SK-N-SH (cell line): ENCODE measurements at regions of chrX and their contacts with region 1.

Region 1: DNA sequence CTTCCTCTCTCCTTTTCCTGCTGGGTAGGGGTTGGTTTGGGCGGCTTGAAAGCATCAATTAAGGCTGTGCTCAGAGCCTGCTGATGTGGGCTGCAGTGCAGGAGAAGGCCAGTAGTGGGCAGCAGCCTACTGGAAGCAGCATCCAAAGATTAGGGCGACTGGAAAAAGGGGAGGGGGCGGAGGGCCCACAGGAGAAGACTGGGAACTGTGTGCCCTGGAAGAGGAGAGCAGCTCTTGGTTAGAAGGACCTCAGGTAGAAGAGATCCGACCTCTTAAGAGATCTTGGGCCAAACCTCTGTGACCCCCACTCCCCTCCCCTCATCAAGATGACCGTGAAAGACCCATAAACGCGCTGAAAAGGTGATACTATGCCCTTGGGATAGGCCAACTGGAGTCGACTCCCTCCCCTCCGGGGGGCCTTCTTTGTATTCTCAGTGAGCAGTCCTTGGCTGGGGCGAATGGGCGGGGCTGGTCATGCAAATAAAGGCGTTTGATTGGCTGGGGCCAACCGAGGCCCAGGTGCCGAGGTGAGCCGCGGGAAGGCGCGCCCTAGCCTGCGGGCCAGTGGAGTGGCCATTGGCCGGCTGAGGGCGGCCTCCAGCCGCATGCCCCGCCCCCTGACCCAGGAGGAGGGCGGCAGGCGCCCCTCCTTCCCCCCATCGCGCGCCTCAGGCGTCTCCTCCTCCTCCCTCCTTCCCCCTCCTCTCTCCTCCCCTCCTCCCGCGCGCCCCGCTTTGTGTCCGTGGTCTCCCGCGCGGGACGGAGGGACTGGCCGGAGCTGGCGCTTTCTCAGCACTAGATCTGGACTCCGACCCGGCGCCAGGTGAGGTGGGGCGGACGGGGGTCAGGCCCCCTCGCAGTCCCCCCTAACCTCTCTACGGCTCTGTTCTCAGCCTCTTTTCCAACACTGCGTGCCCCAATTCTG is 10.1 kb downstream of the DLG3 start:
- DNase-seq: peak; percentile 88
- H3K4me3 ChIP-seq: peak overlapping the region; percentile 62 to 64
- H3K27ac ChIP-seq: peak overlapping the region in 1 of 2 experiments; percentile 54; a peak in 1 of 4 replicates
- H3K4me1 ChIP-seq: peaks cover 0 to 4% of the 10 kb centered on the region in 2 experiments; a peak in 1 of 4 replicates
- H3K27me3 ChIP-seq: no peaks in the 10 kb centered on the region
- CTCF ChIP-seq: peak; percentile 96
- EP300 ChIP-seq: no peak
- RAD21 ChIP-seq: peak; percentile 79

Region 2: GRCh38 chrX:70444326-70444945 is 10.3 kb before region 1 on chrX and contains the start of gene DLG3:
- CTCF ChIA-PET with region 1: interaction called, 16 read pairs
- POLR2A ChIA-PET with region 1: no interaction called
- DNase-seq: peak; percentile 84
- H3K4me3 ChIP-seq: peak within 1 kb of the TSS; percentile 46 to 59
- H3K27ac ChIP-seq: no peak within 1 kb of the TSS
- H3K4me1 ChIP-seq: no peaks in the 10 kb centered on the region; a peak in 1 of 4 replicates
- H3K27me3 ChIP-seq: peaks cover 16% of the 10 kb centered on the region
- CTCF ChIP-seq: 0 out of 2 replicates have a peak, but pooled peaks have one; percentile 8
- EP300 ChIP-seq: no peak
- RAD21 ChIP-seq: no peak
- polyA plus RNA-seq, gene DLG3: 11.7 TPM in 2 replicates